ENCODE measurements at regions of chr7 and their contacts with region 1.

Region 1: DNA sequence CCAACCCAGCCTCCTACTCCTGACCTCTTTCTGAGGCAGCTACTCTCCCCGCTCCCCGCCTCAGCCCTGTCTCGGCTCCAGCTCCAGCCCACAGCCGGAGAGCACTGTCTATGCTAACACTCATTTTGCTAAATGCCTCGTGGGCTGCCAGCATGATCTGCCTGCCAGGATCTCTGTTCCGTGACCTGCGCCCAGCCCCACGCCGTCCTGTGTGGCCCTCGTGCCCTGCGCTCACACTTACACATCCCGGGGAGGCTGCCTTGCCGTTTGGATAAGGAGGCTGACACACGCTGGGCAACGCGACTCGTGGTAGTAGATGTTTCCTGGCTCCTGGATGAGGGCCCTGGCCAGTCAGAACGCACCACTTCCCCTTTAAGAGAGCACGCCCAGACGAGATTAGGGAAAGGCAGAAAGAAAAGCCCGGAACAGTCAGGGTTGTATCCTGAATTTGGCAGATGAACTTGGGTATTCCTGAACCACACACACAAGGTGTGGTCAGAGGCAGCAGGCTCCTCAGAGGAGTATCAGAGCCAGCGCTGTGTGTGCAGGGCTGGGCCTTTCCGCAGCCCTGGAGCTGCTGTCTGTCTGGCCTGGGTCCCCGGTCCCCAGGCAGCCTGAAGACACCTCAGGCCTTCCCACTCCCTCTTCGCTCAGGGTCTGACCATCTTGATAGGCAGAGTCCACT is 97.7 kb upstream of the EFCAB10 start:
- DNase-seq: peak; percentile 42
- ATAC-seq: peak; percentile 62
- H3K4me3 Mint-ChIP-seq: peak overlapping the region; percentile 94
- H3K27ac Mint-ChIP-seq: peak overlapping the region; percentile 89
- H3K4me1 Mint-ChIP-seq: peaks cover 57% of the 10 kb centered on the region
- H3K27me3 Mint-ChIP-seq: no peaks in the 10 kb centered on the region
- CTCF ChIP-seq: no peak

Region 2: DNA sequence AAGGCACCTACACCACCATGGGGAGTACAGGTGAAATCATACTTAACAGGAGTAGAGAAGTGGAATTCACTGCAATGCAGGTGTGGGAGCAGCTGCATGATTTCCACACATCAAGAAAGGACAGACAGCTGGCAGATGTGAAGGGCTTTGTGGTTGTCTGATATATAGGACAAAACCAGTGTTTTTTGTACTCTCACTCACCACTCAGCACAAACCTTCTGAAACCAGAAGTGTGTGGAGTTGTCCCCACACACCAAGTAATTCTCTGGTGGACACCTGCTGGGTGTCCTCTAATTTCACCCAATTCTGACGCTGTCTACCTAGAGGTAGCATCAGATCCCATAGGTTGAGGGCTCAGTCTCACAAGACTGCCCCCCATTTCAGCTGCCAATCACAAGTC is 992.7 kb before region 1 on chr7:
- CTCF ChIA-PET with region 1: no interaction called
- POLR2A ChIA-PET with region 1: no interaction called
- intact Hi-C with region 1: no loop called
- DNase-seq: no peak
- ATAC-seq: no peak
- H3K4me3 Mint-ChIP-seq: no peak overlapping the region
- H3K27ac Mint-ChIP-seq: no peak overlapping the region
- H3K4me1 Mint-ChIP-seq: no peaks in the 10 kb centered on the region
- H3K27me3 Mint-ChIP-seq: peaks cover 4% of the 10 kb centered on the region
- CTCF ChIP-seq: no peak

Region 3: GRCh38 chr7:105808703-105809590 is 130.0 kb after region 1 on chr7:
- CTCF ChIA-PET with region 1: no interaction called
- POLR2A ChIA-PET with region 1: no interaction called
- intact Hi-C with region 1: loop called (anchors 5 kb)
- DNase-seq: peak; percentile 60
- ATAC-seq: peak; percentile 95
- H3K4me3 Mint-ChIP-seq: peak overlapping the region; percentile 66
- H3K27ac Mint-ChIP-seq: peak overlapping the region; percentile 87
- H3K4me1 Mint-ChIP-seq: peaks cover 46% of the 10 kb centered on the region
- H3K27me3 Mint-ChIP-seq: no peaks in the 10 kb centered on the region
- CTCF ChIP-seq: no peak

Measured in activated B cell treated with CpG ODN at 0.5 μM for 24 hours (primary cell).